MCF 10A (cell line): ENCODE measurements at regions of chr5 and their contacts with region 1.

Region 1: GRCh38 chr5:151447174-151448037 is at the start of gene SLC36A1:
- DNase-seq: peak; percentile 97
- H3K4me3 Mint-ChIP-seq: peak within 1 kb of the TSS; percentile 77
- H3K27ac Mint-ChIP-seq: peak within 1 kb of the TSS; percentile 66
- H3K4me1 Mint-ChIP-seq: peaks cover 19% of the 10 kb centered on the region
- H3K27me3 Mint-ChIP-seq: peaks cover 28% of the 10 kb centered on the region
- CTCF ChIP-seq: peak; percentile 97
- total RNA-seq, gene SLC36A1: 10.4 and 16.2 TPM in 2 replicates

Region 2: DNA sequence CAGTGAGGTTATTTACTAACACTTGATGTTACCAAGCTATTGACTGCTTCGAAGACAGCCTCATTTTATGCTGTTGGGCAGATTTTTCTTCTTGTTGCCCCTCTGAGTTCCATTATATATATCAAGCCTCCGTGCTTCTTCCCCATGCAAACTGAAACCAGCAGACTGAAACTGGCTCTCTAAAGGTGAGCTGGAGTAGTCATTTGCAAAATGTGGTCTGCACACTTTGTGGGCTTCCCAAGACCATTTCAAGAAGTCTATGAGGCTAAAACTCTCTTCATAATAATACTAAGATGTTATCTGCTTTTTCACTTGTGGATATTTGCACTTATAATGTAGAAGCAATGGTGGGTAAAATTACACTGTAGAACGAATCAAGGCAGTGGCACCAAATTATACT is 13.9 kb after region 1 on chr5:
- CTCF ChIA-PET with region 1: interaction called, 58 read pairs
- POLR2A ChIA-PET with region 1: interaction called, 4 read pairs
- intact Hi-C with region 1: no loop called
- DNase-seq: no peak
- H3K4me3 Mint-ChIP-seq: no peak overlapping the region
- H3K27ac Mint-ChIP-seq: no peak overlapping the region
- H3K4me1 Mint-ChIP-seq: no peaks in the 10 kb centered on the region
- H3K27me3 Mint-ChIP-seq: no peaks in the 10 kb centered on the region
- CTCF ChIP-seq: no peak

Region 3: GRCh38 chr5:151499501-151500035 is 52.2 kb after region 1 on chr5:
- CTCF ChIA-PET with region 1: interaction called, 17 read pairs
- POLR2A ChIA-PET with region 1: interaction called, 10 read pairs
- intact Hi-C with region 1: loop called (anchors 1 kb)
- DNase-seq: peak; percentile 46
- H3K4me3 Mint-ChIP-seq: no peak overlapping the region
- H3K27ac Mint-ChIP-seq: no peak overlapping the region
- H3K4me1 Mint-ChIP-seq: no peaks in the 10 kb centered on the region
- H3K27me3 Mint-ChIP-seq: no peaks in the 10 kb centered on the region
- CTCF ChIP-seq: no peak

Region 4: DNA sequence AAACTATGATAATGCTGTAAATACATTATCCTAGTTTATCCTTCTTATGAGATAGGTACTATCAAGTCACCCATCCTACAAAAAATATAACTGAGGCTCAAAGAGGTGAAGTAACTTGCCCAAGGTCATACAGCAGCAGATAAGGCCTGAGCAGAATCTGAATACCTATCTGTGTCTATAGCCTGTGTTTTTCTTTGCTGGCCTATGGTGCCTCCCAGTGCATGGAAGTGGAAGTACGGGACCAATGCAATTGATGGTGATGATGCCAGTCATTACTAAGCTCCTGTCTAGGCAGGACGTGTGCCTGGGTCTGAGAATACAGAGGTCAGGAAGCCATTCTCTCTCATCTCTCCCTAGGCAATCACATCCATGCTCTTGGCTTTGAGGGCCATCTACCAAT is 75.9 kb after region 1 on chr5:
- CTCF ChIA-PET with region 1: interaction called, 29 read pairs
- POLR2A ChIA-PET with region 1: no interaction called
- intact Hi-C with region 1: loop called (anchors 1 kb)
- DNase-seq: peak; percentile 71
- H3K4me3 Mint-ChIP-seq: no peak overlapping the region
- H3K27ac Mint-ChIP-seq: no peak overlapping the region
- H3K4me1 Mint-ChIP-seq: peaks cover 2% of the 10 kb centered on the region
- H3K27me3 Mint-ChIP-seq: no peaks in the 10 kb centered on the region
- CTCF ChIP-seq: peak; percentile 84